ENCODE measurements at regions of chr3 and their contacts with region 1.

Region 1: GRCh38 chr3:119676771-119677640 is at the start of gene COX17:
- DNase-seq: peak; percentile 87
- ATAC-seq: peak; percentile 83
- H3K4me3 Mint-ChIP-seq: peak within 1 kb of the TSS; percentile 96
- H3K27ac Mint-ChIP-seq: peak within 1 kb of the TSS; percentile 98
- H3K4me1 Mint-ChIP-seq: peaks cover 28% of the 10 kb centered on the region
- H3K27me3 Mint-ChIP-seq: no peaks in the 10 kb centered on the region
- CTCF ChIP-seq: no peak
- total RNA-seq, gene COX17: 58.8 and 58.9 TPM in 2 replicates

Region 2: GRCh38 chr3:119034256-119035013 is 642.6 kb before region 1 on chr3 and contains the start of gene IGSF11:
- CTCF ChIA-PET with region 1: no interaction called
- POLR2A ChIA-PET with region 1: no interaction called
- intact Hi-C with region 1: loop called (anchors 5 kb)
- DNase-seq: peak; percentile 49
- ATAC-seq: peak; percentile 88
- H3K4me3 Mint-ChIP-seq: peak within 1 kb of the TSS; percentile 82
- H3K27ac Mint-ChIP-seq: no peak within 1 kb of the TSS
- H3K4me1 Mint-ChIP-seq: peaks cover 9% of the 10 kb centered on the region
- H3K27me3 Mint-ChIP-seq: peaks cover 40% of the 10 kb centered on the region
- CTCF ChIP-seq: no peak
- total RNA-seq, gene IGSF11: not detected in 2 replicates

Region 3: DNA sequence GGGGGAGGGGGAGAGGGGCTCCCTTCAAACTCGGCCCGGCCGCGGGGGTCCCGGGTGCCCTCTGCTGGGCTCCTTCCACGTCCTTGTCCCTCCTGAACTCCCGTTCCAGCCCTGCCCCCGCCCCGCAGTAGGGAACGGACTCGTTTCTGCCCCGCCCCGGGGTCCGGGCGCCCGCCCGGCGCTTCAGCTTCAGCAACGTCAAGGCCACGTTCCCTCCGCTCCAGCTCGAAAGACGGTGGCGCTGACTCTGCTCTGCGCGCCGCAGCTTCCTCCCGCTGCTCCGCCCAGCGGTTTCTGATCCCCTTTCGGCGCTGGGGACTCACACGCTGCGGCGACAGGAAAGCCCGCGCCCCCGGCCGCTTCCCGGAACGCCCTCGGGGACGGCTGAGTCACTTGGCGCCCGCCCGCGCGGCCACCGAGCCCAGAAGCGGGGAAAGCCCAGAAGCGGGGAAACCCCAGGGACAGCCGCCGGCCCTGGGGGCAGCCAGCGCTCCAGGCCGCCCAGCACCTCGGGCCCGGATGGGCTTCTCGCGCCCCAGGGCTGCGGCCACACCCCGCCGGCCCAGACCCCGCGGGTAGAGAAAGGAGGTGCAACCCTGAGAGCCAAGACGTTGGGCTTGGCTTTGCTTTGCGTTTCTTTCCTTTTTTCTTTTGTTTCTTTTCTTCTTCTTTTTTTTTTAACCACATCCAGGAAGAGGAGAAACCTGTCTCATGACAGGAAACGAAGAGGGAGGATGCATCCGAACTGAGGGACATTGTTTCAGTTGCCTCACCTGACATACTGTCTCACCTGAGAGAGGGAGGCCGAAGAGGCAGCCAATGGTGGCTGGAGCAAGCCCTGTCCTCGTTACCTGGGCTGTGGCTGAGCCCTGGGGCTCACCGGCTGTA is 353.9 kb before region 1 on chr3:
- CTCF ChIA-PET with region 1: no interaction called
- POLR2A ChIA-PET with region 1: no interaction called
- intact Hi-C with region 1: loop called (anchors 1 kb)
- DNase-seq: peak; percentile 96
- ATAC-seq: peak; percentile 87
- H3K4me3 Mint-ChIP-seq: peak overlapping the region; percentile 87
- H3K27ac Mint-ChIP-seq: peak overlapping the region; percentile 94
- H3K4me1 Mint-ChIP-seq: peaks cover 59% of the 10 kb centered on the region
- H3K27me3 Mint-ChIP-seq: no peaks in the 10 kb centered on the region
- CTCF ChIP-seq: no peak

Region 4: GRCh38 chr3:119437691-119438258 is 239.2 kb before region 1 on chr3:
- CTCF ChIA-PET with region 1: no interaction called
- POLR2A ChIA-PET with region 1: no interaction called
- intact Hi-C with region 1: no loop called
- DNase-seq: no peak
- ATAC-seq: no peak
- H3K4me3 Mint-ChIP-seq: no peak overlapping the region
- H3K27ac Mint-ChIP-seq: no peak overlapping the region
- H3K4me1 Mint-ChIP-seq: no peaks in the 10 kb centered on the region
- H3K27me3 Mint-ChIP-seq: no peaks in the 10 kb centered on the region
- CTCF ChIP-seq: no peak

Region 5: GRCh38 chr3:119498186-119498987 is 178.6 kb before region 1 on chr3 and contains the start of gene TIMMDC1:
- CTCF ChIA-PET with region 1: interaction called, 12 read pairs
- POLR2A ChIA-PET with region 1: interaction called, 19 read pairs
- intact Hi-C with region 1: loop called (anchors 1 kb)
- DNase-seq: peak; percentile 96
- ATAC-seq: peak; percentile 98
- H3K4me3 Mint-ChIP-seq: peak within 1 kb of the TSS; percentile 99
- H3K27ac Mint-ChIP-seq: peak within 1 kb of the TSS; percentile 97
- H3K4me1 Mint-ChIP-seq: peaks cover 38% of the 10 kb centered on the region
- H3K27me3 Mint-ChIP-seq: no peaks in the 10 kb centered on the region
- CTCF ChIP-seq: no peak
- total RNA-seq, gene TIMMDC1: 73.0 and 76.1 TPM in 2 replicates

Region 6: DNA sequence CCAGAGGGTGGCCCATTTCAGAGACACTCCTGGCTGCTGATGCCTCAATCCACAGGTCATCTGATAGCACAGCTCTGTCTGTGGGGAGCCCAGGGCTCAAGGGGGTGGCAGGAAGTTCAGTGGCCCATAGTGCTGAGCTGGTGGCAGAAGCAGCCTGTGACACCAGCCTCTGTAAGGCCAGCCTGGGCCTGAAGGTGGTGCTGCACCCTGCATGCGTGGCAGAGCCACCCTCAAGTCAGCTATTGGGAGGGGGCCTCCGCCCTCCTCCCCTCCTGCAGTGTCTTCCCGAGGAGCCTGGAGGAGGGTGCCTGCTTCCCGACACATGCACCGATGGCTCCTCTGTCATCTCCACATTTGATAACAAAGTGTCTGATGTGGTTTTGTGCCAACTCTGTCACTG is 76.3 kb before region 1 on chr3:
- CTCF ChIA-PET with region 1: interaction called, 17 read pairs
- POLR2A ChIA-PET with region 1: interaction called, 11 read pairs
- intact Hi-C with region 1: loop called (anchors 1 kb)
- DNase-seq: no peak
- ATAC-seq: peak; percentile 87
- H3K4me3 Mint-ChIP-seq: no peak overlapping the region
- H3K27ac Mint-ChIP-seq: no peak overlapping the region
- H3K4me1 Mint-ChIP-seq: peaks cover 46% of the 10 kb centered on the region
- H3K27me3 Mint-ChIP-seq: no peaks in the 10 kb centered on the region
- CTCF ChIP-seq: no peak

Region 7: DNA sequence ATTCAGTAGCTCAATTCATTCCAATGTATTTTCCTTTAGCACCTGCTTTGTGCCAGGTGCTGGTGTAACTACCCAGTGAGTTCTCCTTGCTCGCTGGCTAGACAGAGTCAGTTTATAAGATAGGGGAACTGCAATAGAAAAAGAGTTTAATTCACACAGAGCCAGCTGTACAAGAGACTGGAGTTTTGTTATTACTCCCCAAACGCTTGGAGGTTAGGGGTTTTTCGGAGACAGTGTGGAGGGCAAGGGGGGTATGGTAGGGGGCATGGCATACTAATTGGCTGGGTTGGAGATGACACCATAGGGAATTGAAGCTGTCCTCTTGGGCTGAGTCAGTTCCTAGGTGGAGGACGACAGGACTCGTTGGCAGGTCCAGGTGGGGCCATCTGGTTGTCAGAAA is 20.4 kb after region 1 on chr3:
- CTCF ChIA-PET with region 1: interaction called, 5 read pairs
- POLR2A ChIA-PET with region 1: interaction called, 9 read pairs
- intact Hi-C with region 1: loop called (anchors 1 kb)
- DNase-seq: no peak
- ATAC-seq: peak; percentile 49
- H3K4me3 Mint-ChIP-seq: no peak overlapping the region
- H3K27ac Mint-ChIP-seq: peak overlapping the region; percentile 97
- H3K4me1 Mint-ChIP-seq: peaks cover 47% of the 10 kb centered on the region
- H3K27me3 Mint-ChIP-seq: no peaks in the 10 kb centered on the region
- CTCF ChIP-seq: no peak